Naive thymus-derived CD4-positive, alpha-beta T cell (primary cell): ENCODE measurements at regions of chr10 and their contacts with region 1.

Region 1: DNA sequence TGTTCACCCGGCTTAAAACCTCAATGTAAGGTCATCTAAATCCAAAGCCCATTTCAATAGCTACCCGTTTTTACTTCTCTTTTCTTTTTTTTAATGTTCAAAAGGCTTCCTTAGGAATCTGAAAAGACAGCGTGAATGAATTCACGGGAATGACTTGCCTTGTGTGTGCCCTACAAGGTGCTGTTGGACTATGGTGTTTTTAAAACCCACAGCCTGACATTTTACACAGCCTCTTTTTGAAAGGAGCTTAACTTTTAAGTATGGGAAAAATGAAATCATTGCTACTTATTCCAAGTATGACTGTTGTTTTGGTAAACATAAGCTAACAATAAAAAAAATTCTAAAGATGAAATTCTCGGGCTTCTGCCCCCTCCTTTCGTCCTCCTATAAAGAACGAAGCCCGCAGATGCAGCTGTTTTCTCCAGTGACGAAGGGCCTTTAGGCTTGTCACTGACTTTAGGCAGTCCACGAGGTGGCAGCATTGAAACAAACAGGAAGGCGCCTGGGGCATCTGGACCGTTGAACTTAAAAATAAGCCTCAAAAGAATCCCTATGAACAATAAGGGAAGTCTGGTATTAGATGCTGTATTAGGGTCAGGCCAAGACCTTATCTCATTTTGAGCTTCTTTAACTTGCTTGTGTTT is 141.3 kb downstream of the NRP1 start:
- DNase-seq: peak; percentile 28 to 70 (median 62)
- ATAC-seq: peak; percentile 91
- H3K4me3 ChIP-seq: no peak overlapping the region
- H3K4me3 Mint-ChIP-seq: no peak overlapping the region
- H3K27ac ChIP-seq: no peak overlapping the region
- H3K27ac Mint-ChIP-seq: peak overlapping the region in 1 of 9 donors; percentile 37
- H3K4me1 ChIP-seq: no peaks in the 10 kb centered on the region
- H3K4me1 Mint-ChIP-seq: peaks cover 0 to 6% (median 0%) of the 10 kb centered on the region in 7 donors
- H3K27me3 ChIP-seq: no peaks in the 10 kb centered on the region
- H3K27me3 Mint-ChIP-seq: peaks cover 0 to 28% (median 5%) of the 10 kb centered on the region in 5 donors

Region 2: DNA sequence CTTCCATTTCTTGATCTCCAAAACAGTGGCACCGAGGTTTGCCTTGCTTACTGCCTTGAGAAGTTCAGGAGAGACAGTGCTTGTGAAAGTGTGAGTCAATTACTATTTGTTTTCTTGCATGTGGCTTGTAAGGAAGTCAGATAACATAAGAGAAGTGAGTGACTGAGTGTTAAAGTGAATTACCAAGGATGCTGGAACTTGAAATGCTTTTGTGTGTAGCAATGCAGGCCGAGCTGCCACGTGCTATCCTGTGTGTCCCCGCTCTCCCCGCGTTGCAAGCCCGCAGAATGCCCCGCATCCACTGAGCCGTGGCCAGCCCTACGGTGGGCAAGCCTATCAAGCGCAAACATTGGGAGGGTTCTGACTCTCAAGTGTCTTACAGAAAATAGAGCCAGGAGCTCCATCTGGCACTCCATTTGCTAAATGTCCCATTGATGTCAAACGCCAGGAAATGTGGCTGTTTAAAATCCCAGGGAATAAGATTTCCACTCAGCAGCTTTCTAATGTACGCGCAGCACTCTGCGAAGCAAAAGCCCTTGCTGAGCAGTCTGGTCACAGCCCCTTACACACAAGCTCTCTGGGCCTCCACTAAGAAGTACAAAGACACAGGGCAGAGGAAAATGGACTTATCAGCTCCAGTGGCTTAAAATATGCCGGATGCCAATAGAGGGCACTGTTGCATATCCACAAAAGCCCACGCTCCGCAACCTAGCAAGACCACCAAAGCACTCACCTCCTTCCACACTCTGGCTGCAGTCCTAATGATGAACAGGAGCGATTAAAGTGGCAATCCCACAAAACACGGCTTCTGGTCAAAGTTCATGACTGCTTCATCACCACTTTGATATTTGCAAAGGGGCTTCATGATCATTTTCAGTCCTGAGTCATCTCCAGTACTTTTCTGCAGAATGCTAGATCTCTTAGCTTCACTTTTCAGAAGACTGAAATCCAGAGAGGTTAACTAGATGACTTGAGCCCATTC is 77.2 kb before region 1 on chr10:
- CTCF ChIA-PET with region 1: no interaction called
- POLR2A ChIA-PET with region 1: no interaction called
- intact Hi-C with region 1: loop called in 1 of 2 experiments (anchors 2 kb)
- DNase-seq: no peak
- ATAC-seq: peak; percentile 24
- H3K4me3 ChIP-seq: peak overlapping the region; percentile 31
- H3K4me3 Mint-ChIP-seq: peak overlapping the region in 3 of 10 donors; percentile 8 to 20 (median 13)
- H3K27ac ChIP-seq: no peak overlapping the region
- H3K27ac Mint-ChIP-seq: peak overlapping the region in 3 of 9 donors; percentile 51 to 76 (median 65)
- H3K4me1 ChIP-seq: peaks cover 9 to 95% of the 10 kb centered on the region in 2 donors
- H3K4me1 Mint-ChIP-seq: peaks cover 23 to 69% (median 32%) of the 10 kb centered on the region in 7 donors
- H3K27me3 ChIP-seq: no peaks in the 10 kb centered on the region
- H3K27me3 Mint-ChIP-seq: no peaks in the 10 kb centered on the region

Region 3: DNA sequence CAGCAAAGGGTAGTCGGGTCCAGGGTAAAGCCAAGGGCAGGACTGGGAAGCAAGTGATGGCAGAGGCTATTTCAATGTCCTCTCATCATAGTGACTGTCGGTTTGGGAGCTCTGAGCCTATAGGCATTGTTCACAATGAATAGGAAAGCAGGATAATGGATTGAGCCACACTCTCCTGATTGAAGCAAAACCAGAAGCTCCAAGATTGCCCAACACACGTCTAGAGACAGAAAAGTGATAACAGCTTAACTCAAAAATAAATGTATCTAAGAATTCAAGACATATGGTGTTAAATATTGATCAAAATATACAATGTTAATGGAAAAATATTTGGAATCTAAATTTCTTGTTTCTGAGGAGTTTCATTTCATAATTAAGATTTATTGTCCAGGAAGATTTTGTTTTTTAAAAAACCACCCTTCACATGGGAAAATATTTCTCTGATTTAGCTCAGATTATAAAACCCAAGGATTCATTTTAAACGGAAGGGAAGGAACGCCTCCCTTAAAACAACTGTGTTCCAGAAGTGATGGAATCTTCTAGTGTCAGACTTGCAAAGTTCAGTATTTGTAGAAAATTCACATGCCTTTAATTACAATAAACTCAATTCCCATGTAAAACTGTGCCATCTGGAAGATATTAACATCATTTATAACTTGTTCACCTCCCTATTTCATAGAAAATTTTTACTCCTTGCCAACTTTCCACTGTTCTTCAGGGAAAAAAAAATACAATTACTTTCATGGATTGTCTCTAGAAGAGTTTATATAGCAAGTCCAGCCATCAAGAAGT is 86.8 kb after region 1 on chr10:
- CTCF ChIA-PET with region 1: no interaction called
- POLR2A ChIA-PET with region 1: no interaction called
- intact Hi-C with region 1: loop called in 1 of 2 experiments (anchors 5 kb)
- DNase-seq: no peak
- ATAC-seq: no peak
- H3K4me3 ChIP-seq: no peak overlapping the region
- H3K4me3 Mint-ChIP-seq: no peak overlapping the region
- H3K27ac ChIP-seq: no peak overlapping the region
- H3K27ac Mint-ChIP-seq: no peak overlapping the region
- H3K4me1 ChIP-seq: no peaks in the 10 kb centered on the region
- H3K4me1 Mint-ChIP-seq: no peaks in the 10 kb centered on the region
- H3K27me3 ChIP-seq: no peaks in the 10 kb centered on the region
- H3K27me3 Mint-ChIP-seq: peaks cover 0 to 41% (median 7%) of the 10 kb centered on the region in 5 donors

Region 4: GRCh38 chr10:33406596-33406995 is 213.4 kb after region 1 on chr10:
- CTCF ChIA-PET with region 1: no interaction called
- POLR2A ChIA-PET with region 1: no interaction called
- intact Hi-C with region 1: loop called in 1 of 2 experiments (anchors 5 kb)
- DNase-seq: no peak
- ATAC-seq: no peak
- H3K4me3 ChIP-seq: no peak overlapping the region
- H3K4me3 Mint-ChIP-seq: no peak overlapping the region
- H3K27ac ChIP-seq: no peak overlapping the region
- H3K27ac Mint-ChIP-seq: no peak overlapping the region
- H3K4me1 ChIP-seq: no peaks in the 10 kb centered on the region
- H3K4me1 Mint-ChIP-seq: no peaks in the 10 kb centered on the region
- H3K27me3 ChIP-seq: no peaks in the 10 kb centered on the region
- H3K27me3 Mint-ChIP-seq: peaks cover 14 to 59% (median 53%) of the 10 kb centered on the region in 5 donors

Region 5: GRCh38 chr10:33434933-33435332 is 241.8 kb after region 1 on chr10:
- CTCF ChIA-PET with region 1: no interaction called
- POLR2A ChIA-PET with region 1: no interaction called
- intact Hi-C with region 1: no loop called
- DNase-seq: no peak
- ATAC-seq: no peak
- H3K4me3 ChIP-seq: no peak overlapping the region
- H3K4me3 Mint-ChIP-seq: no peak overlapping the region
- H3K27ac ChIP-seq: no peak overlapping the region
- H3K27ac Mint-ChIP-seq: no peak overlapping the region
- H3K4me1 ChIP-seq: no peaks in the 10 kb centered on the region
- H3K4me1 Mint-ChIP-seq: no peaks in the 10 kb centered on the region
- H3K27me3 ChIP-seq: no peaks in the 10 kb centered on the region
- H3K27me3 Mint-ChIP-seq: peaks cover 3 to 24% (median 14%) of the 10 kb centered on the region in 5 donors

Region 6: DNA sequence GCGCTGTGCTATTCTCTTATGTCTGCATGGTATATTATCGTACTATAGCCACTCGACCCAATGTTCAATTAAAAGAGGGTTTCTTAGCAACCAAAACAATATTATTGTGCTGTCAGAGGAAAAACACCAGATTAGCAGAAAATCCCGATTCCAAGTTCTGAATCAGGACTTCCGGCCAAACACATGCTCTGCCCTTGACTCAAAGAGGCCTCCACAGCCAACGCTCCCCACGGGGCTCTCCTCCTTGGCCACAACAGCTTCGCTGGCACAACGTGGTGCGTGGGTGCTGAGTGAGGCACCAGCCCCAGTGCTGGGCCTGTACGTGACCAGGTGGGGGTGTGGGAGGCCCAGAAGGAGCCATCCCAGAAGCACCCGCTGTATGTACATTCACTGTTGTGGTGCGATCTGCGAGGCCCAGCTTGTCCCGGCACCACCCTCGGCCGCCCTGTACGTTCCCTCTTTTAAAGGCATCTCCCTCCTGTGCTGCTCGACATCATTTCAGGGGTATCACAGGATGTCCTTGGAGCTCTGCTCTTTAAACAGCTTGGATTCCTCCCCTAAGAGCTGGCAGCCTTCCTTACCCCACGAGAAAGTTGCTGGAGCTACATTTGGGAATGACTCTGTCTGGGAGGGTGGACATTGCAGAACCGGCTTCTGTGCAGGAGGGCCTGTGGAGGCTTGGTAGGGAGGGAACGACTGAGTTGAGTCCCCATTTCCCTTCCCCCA is 885.7 kb after region 1 on chr10:
- CTCF ChIA-PET with region 1: no interaction called
- POLR2A ChIA-PET with region 1: no interaction called
- intact Hi-C with region 1: loop called in 1 of 2 experiments (anchors 10 kb)
- DNase-seq: no peak
- ATAC-seq: no peak
- H3K4me3 ChIP-seq: no peak overlapping the region
- H3K4me3 Mint-ChIP-seq: no peak overlapping the region
- H3K27ac ChIP-seq: no peak overlapping the region
- H3K27ac Mint-ChIP-seq: no peak overlapping the region
- H3K4me1 ChIP-seq: no peaks in the 10 kb centered on the region
- H3K4me1 Mint-ChIP-seq: peaks cover 0 to 1% (median 0%) of the 10 kb centered on the region in 7 donors
- H3K27me3 ChIP-seq: no peaks in the 10 kb centered on the region
- H3K27me3 Mint-ChIP-seq: peaks cover 0 to 4% (median 0%) of the 10 kb centered on the region in 5 donors

Region 7: DNA sequence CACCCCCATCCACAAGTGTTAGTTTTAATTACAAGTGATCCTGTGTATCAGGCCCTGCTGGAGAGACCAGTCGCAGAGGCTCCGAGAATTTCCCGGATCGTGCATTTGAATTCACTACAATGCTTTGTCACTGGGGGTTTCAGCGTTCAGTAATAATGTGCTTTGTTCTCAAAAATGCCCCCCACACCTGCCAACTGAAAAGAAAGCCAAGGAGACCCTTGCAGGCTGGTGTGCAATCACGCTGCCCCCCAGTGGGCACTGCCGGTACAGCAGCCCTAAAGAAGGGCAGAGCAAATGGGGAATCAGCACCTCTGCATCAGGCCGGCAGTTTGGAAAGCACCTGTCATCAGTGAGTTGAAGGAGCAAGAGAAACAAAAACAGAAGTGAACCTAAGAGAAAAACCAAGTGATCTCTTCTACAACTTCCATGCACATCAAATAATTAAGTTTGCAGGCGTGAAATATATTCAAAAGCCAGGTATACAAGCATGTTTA is 1444.3 kb after region 1 on chr10:
- CTCF ChIA-PET with region 1: interaction called, 17 read pairs
- POLR2A ChIA-PET with region 1: no interaction called
- intact Hi-C with region 1: loop called in 1 of 2 experiments (anchors 1 kb)
- DNase-seq: peak; percentile 20 to 70 (median 53)
- ATAC-seq: peak; percentile 77
- H3K4me3 ChIP-seq: no peak overlapping the region
- H3K4me3 Mint-ChIP-seq: peak overlapping the region in 8 of 10 donors; percentile 0 to 46 (median 18)
- H3K27ac ChIP-seq: no peak overlapping the region
- H3K27ac Mint-ChIP-seq: peak overlapping the region in 1 of 9 donors; percentile 56
- H3K4me1 ChIP-seq: no peaks in the 10 kb centered on the region
- H3K4me1 Mint-ChIP-seq: peaks cover 7 to 18% (median 13%) of the 10 kb centered on the region in 7 donors
- H3K27me3 ChIP-seq: no peaks in the 10 kb centered on the region
- H3K27me3 Mint-ChIP-seq: peaks cover 0 to 13% (median 9%) of the 10 kb centered on the region in 5 donors